Naive thymus-derived CD4-positive, alpha-beta T cell (primary cell): ENCODE measurements at regions of chr6 and their contacts with region 1.

Region 1: DNA sequence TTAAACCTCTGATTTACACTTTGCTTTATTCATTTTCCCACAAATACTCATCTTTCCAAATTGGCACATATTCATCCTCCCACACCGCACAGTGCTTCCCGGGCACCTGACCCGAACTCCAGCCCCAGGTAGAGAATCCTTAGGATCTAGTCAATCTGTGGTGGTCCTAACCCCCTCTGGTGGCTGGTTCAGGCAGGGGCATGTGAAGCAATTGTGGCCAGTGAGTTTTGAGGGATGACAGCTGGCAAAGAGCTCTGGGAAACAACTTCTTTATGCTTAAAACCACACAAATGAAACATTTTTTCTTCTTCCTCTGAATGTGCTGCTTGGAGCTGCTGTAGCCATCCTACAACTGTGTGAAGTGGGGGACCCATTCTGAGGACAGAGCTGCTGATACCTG is 54.7 kb downstream of the ELOVL5 start:
- DNase-seq: peak in 1 of 9 donors; percentile 7
- ATAC-seq: no peak
- H3K4me3 ChIP-seq: no peak overlapping the region
- H3K4me3 Mint-ChIP-seq: peak overlapping the region in 1 of 10 donors; percentile 10
- H3K27ac ChIP-seq: no peak overlapping the region
- H3K27ac Mint-ChIP-seq: peak overlapping the region in 8 of 9 donors; percentile 41 to 86 (median 74)
- H3K4me1 ChIP-seq: peaks cover 35 to 41% of the 10 kb centered on the region in 2 donors
- H3K4me1 Mint-ChIP-seq: peaks cover 46 to 94% (median 83%) of the 10 kb centered on the region in 7 donors
- H3K27me3 ChIP-seq: no peaks in the 10 kb centered on the region
- H3K27me3 Mint-ChIP-seq: no peaks in the 10 kb centered on the region

Region 2: GRCh38 chr6:52503848-52504781 is 790.0 kb before region 1 on chr6:
- CTCF ChIA-PET with region 1: no interaction called
- POLR2A ChIA-PET with region 1: no interaction called
- intact Hi-C with region 1: no loop called
- DNase-seq: no peak
- ATAC-seq: peak; percentile 71
- H3K4me3 ChIP-seq: no peak overlapping the region
- H3K4me3 Mint-ChIP-seq: no peak overlapping the region
- H3K27ac ChIP-seq: no peak overlapping the region
- H3K27ac Mint-ChIP-seq: no peak overlapping the region
- H3K4me1 ChIP-seq: no peaks in the 10 kb centered on the region
- H3K4me1 Mint-ChIP-seq: peaks cover 0 to 6% (median 0%) of the 10 kb centered on the region in 7 donors
- H3K27me3 ChIP-seq: no peaks in the 10 kb centered on the region
- H3K27me3 Mint-ChIP-seq: no peaks in the 10 kb centered on the region

Region 3: GRCh38 chr6:53171605-53172446 is 122.3 kb before region 1 on chr6:
- CTCF ChIA-PET with region 1: interaction called, 11 read pairs
- POLR2A ChIA-PET with region 1: no interaction called
- intact Hi-C with region 1: loop called (anchors 1 to 5 kb)
- DNase-seq: peak; percentile 76 to 95 (median 87)
- ATAC-seq: peak; percentile 100
- H3K4me3 ChIP-seq: no peak overlapping the region
- H3K4me3 Mint-ChIP-seq: no peak overlapping the region
- H3K27ac ChIP-seq: no peak overlapping the region
- H3K27ac Mint-ChIP-seq: no peak overlapping the region
- H3K4me1 ChIP-seq: no peaks in the 10 kb centered on the region
- H3K4me1 Mint-ChIP-seq: peaks cover 0 to 6% (median 0%) of the 10 kb centered on the region in 7 donors
- H3K27me3 ChIP-seq: no peaks in the 10 kb centered on the region
- H3K27me3 Mint-ChIP-seq: peaks cover 0 to 3% (median 0%) of the 10 kb centered on the region in 5 donors

Region 4: DNA sequence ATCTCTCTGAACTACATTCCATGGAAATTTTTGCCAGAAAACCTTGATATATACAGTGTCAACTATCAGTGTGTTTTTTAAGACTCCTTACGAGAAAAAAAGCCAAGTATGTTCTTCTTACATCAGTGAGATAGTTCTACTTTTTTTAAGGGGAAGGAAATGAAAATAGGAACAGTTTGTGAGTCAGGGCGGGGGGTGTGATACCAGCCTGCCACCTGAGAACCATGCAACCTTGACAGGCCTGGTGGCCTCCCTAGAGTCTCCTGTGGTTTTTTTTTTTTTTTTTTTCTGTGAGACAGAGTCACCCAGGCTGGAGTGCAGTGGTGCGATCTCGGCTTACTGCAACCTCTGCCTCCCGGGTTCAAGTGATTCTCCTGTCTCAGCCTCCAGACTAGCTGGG is 49.1 kb before region 1 on chr6:
- CTCF ChIA-PET with region 1: no interaction called
- POLR2A ChIA-PET with region 1: no interaction called
- intact Hi-C with region 1: loop called in 1 of 2 experiments (anchors 5 kb)
- DNase-seq: no peak
- ATAC-seq: peak; percentile 81
- H3K4me3 ChIP-seq: no peak overlapping the region
- H3K4me3 Mint-ChIP-seq: no peak overlapping the region
- H3K27ac ChIP-seq: no peak overlapping the region
- H3K27ac Mint-ChIP-seq: peak overlapping the region in 1 of 9 donors; percentile 30
- H3K4me1 ChIP-seq: peaks cover 0 to 17% of the 10 kb centered on the region in 2 donors
- H3K4me1 Mint-ChIP-seq: peaks cover 16 to 44% (median 30%) of the 10 kb centered on the region in 7 donors
- H3K27me3 ChIP-seq: no peaks in the 10 kb centered on the region
- H3K27me3 Mint-ChIP-seq: no peaks in the 10 kb centered on the region

Region 5: GRCh38 chr6:53258774-53259155 is 35.3 kb before region 1 on chr6:
- CTCF ChIA-PET with region 1: no interaction called
- POLR2A ChIA-PET with region 1: no interaction called
- intact Hi-C with region 1: no loop called
- DNase-seq: no peak
- ATAC-seq: no peak
- H3K4me3 ChIP-seq: no peak overlapping the region
- H3K4me3 Mint-ChIP-seq: no peak overlapping the region
- H3K27ac ChIP-seq: no peak overlapping the region
- H3K27ac Mint-ChIP-seq: peak overlapping the region in 1 of 9 donors; percentile 54
- H3K4me1 ChIP-seq: no peaks in the 10 kb centered on the region
- H3K4me1 Mint-ChIP-seq: peaks cover 0 to under 1% (median 0%) of the 10 kb centered on the region in 7 donors
- H3K27me3 ChIP-seq: no peaks in the 10 kb centered on the region
- H3K27me3 Mint-ChIP-seq: no peaks in the 10 kb centered on the region

Region 6: GRCh38 chr6:53335208-53335994 is 41.3 kb after region 1 on chr6:
- CTCF ChIA-PET with region 1: no interaction called
- POLR2A ChIA-PET with region 1: interaction called, 4 read pairs
- intact Hi-C with region 1: loop called in 1 of 2 experiments (anchors 1 kb)
- DNase-seq: peak; percentile 47 to 87 (median 75)
- ATAC-seq: peak; percentile 85
- H3K4me3 ChIP-seq: peak overlapping the region; percentile 50
- H3K4me3 Mint-ChIP-seq: peak overlapping the region; percentile 83 to 95 (median 88)
- H3K27ac ChIP-seq: peak overlapping the region; percentile 88
- H3K27ac Mint-ChIP-seq: peak overlapping the region; percentile 98 to 100 (median 99)
- H3K4me1 ChIP-seq: peaks cover 72 to 74% of the 10 kb centered on the region in 2 donors
- H3K4me1 Mint-ChIP-seq: peaks cover 54 to 95% (median 92%) of the 10 kb centered on the region in 7 donors
- H3K27me3 ChIP-seq: no peaks in the 10 kb centered on the region
- H3K27me3 Mint-ChIP-seq: no peaks in the 10 kb centered on the region

Region 7: DNA sequence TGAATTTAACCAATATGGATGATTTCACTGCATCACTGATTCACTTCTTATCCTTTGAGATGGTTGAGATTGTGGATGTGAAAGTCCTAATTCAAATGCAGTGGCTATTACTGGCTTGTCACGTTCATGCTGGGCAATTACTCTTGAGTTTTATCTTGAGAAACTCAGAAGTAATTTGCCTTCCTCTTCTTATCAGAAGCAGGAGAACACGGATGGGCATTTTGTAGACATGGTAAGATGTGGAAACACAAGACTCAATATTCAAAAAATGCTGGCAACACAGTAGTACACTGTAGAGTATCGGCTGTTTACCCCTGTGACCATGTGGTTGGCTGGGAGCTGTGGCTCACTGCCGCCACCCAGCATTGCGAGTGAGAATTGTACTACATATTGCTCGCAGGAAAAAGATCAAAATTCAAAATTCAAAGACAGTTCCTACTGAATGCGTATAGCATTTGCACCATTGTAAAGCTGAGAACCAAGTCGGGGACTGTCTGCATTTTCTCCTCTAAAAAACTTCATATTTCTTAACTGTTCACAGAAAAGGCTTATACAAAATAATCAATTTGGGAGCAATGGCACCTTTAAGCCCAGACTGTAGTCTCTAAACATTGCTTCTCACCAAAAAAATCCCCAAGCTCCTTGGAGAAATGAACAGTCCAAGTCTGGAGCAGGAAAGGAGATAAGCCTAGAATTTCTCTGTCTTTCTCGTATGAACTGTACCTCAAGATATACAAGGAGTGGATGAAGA is 116.6 kb after region 1 on chr6:
- CTCF ChIA-PET with region 1: interaction called, 19 read pairs
- POLR2A ChIA-PET with region 1: no interaction called
- intact Hi-C with region 1: loop called (anchors 1 kb)
- DNase-seq: peak; percentile 21 to 72 (median 63)
- ATAC-seq: peak; percentile 98
- H3K4me3 ChIP-seq: no peak overlapping the region
- H3K4me3 Mint-ChIP-seq: no peak overlapping the region
- H3K27ac ChIP-seq: no peak overlapping the region
- H3K27ac Mint-ChIP-seq: peak overlapping the region in 1 of 9 donors; percentile 22
- H3K4me1 ChIP-seq: peaks cover 0 to 3% of the 10 kb centered on the region in 2 donors
- H3K4me1 Mint-ChIP-seq: peaks cover 0 to 6% (median 3%) of the 10 kb centered on the region in 7 donors
- H3K27me3 ChIP-seq: no peaks in the 10 kb centered on the region
- H3K27me3 Mint-ChIP-seq: peaks cover 0 to 5% (median 0%) of the 10 kb centered on the region in 5 donors